Activated CD8-positive, alpha-beta T cell treated with anti-CD3 and anti-CD28 coated beads, Interleukin-2, amount 10 ng/mL, durations not matched to agents 7 days and 5 days (primary cell): ENCODE measurements at regions of chr1 and their contacts with region 1.

Region 1: DNA sequence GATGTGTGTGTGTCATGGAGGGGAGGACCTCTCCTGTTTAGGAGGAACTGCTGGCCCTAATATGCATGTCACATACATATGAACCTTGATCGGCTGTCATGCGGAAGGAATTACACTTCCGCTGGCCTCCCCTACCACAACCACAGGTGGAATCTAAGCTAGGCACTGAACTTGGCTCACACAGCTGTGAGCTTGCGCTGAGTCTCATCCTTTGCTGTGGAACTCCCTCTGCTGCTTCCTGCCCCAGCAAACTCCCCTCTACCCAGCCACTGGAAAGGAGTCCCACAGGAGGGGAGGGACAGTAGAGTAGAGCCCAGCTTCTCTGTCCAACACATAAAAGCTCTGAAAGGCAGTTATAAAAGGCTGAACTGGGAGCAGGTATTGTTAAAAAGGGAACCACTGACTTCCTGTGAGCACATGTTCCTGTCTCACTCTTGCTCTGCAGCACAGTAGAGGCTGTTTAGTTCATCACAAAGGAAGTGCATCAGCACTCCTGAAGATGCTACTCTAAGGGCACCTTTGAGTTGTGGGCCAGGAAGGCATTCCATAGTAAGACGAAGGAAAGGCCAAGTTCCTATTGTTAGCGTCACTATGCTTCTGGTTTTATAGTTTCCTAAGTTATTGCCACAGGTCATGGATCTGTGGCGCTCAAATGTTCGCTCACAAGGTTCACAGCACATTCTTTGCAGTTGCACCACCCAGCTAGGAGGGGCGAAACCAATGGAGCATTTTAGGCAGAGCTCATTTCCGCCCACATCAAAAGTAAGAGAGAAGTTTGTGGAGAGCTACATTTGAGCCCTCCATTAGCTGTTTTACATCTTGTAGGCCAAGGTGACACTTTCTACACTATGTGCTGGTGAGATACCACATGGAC is 17.7 kb upstream of the PTPRC start:
- DNase-seq: peak; percentile 86
- ATAC-seq: peak; percentile 77
- H3K4me3 Mint-ChIP-seq: peak overlapping the region; percentile 87
- H3K27ac Mint-ChIP-seq: peak overlapping the region; percentile 99
- H3K4me1 Mint-ChIP-seq: peaks cover 89% of the 10 kb centered on the region
- H3K27me3 Mint-ChIP-seq: no peaks in the 10 kb centered on the region

Region 2: GRCh38 chr1:198520524-198521254 is 100.5 kb before region 1 on chr1:
- CTCF ChIA-PET with region 1: interaction called, 26 read pairs
- POLR2A ChIA-PET with region 1: interaction called, 15 read pairs
- DNase-seq: no peak
- ATAC-seq: peak; percentile 63
- H3K4me3 Mint-ChIP-seq: peak overlapping the region; percentile 71
- H3K27ac Mint-ChIP-seq: peak overlapping the region; percentile 77
- H3K4me1 Mint-ChIP-seq: peaks cover 57% of the 10 kb centered on the region
- H3K27me3 Mint-ChIP-seq: no peaks in the 10 kb centered on the region

Region 3: DNA sequence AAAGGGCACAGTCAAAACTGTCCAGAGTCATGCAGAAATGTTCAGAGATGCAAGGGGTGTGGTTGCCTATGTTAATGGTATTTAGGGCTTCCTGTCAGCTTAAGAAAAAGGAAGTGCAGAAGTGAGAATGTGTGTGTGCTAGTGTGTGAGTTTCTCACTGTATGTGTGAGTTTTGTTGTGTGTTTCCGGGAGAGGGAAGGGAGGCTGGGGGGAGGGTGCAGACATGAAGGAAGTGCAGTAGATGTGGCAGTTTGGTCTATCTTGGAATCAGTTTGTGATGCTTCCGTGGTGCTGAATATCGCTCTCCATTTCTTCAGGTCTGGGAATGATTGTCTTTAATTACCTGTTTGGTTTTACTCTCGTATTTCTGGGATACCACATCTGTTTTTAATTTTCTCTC is 64.2 kb before region 1 on chr1:
- CTCF ChIA-PET with region 1: interaction called, 6 read pairs
- POLR2A ChIA-PET with region 1: interaction called, 13 read pairs
- DNase-seq: peak; percentile 85
- ATAC-seq: peak; percentile 89
- H3K4me3 Mint-ChIP-seq: peak overlapping the region; percentile 43
- H3K27ac Mint-ChIP-seq: peak overlapping the region; percentile 55
- H3K4me1 Mint-ChIP-seq: peaks cover 77% of the 10 kb centered on the region
- H3K27me3 Mint-ChIP-seq: no peaks in the 10 kb centered on the region

Region 4: GRCh38 chr1:198606020-198606438 is 15.2 kb before region 1 on chr1:
- CTCF ChIA-PET with region 1: interaction called, 45 read pairs
- POLR2A ChIA-PET with region 1: interaction called, 32 read pairs
- DNase-seq: no peak
- ATAC-seq: no peak
- H3K4me3 Mint-ChIP-seq: no peak overlapping the region
- H3K27ac Mint-ChIP-seq: no peak overlapping the region
- H3K4me1 Mint-ChIP-seq: peaks cover 60% of the 10 kb centered on the region
- H3K27me3 Mint-ChIP-seq: no peaks in the 10 kb centered on the region

Region 5: DNA sequence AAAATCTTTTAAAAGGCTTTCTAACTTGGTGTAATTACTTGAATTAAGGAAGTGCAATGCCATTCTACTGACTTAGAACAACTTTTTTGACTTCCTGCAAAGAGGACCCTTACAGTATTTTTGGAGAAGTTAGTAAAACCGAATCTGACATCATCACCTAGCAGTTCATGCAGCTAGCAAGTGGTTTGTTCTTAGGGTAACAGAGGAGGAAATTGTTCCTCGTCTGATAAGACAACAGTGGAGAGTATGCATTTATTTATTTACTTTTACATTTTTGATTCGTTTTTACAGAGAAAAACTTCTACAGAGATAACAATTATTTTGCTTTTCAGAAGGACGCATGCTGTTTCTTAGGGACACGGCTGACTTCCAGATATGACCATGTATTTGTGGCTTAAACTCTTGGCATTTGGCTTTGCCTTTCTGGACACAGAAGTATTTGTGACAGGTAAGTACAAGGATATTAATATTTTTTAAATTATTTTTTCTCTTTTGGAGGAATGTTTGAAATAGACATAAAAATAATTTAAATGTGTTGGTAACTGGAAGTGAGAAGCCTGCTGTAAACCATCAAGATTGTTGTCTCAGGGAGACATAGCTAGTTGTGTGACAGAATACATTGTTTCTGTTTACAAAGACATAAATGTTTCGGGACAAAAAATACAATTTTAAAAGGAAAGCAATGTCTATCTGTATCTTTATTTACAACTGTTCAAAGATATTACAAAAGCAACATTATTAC is 17.9 kb after region 1 on chr1 and contains the start of gene PTPRC:
- CTCF ChIA-PET with region 1: interaction called, 169 read pairs
- POLR2A ChIA-PET with region 1: interaction called, 215 read pairs
- DNase-seq: peak; percentile 65
- ATAC-seq: peak; percentile 62
- H3K4me3 Mint-ChIP-seq: peak within 1 kb of the TSS; percentile 83
- H3K27ac Mint-ChIP-seq: peak within 1 kb of the TSS; percentile 97
- H3K4me1 Mint-ChIP-seq: peaks cover 48% of the 10 kb centered on the region
- H3K27me3 Mint-ChIP-seq: no peaks in the 10 kb centered on the region
- total RNA-seq, gene PTPRC: 604 to 619 TPM

Region 6: GRCh38 chr1:198656500-198656932 is 35.3 kb after region 1 on chr1:
- CTCF ChIA-PET with region 1: interaction called, 29 read pairs
- POLR2A ChIA-PET with region 1: interaction called, 89 read pairs
- DNase-seq: peak; percentile 79
- ATAC-seq: peak; percentile 72
- H3K4me3 Mint-ChIP-seq: peak overlapping the region; percentile 75
- H3K27ac Mint-ChIP-seq: peak overlapping the region; percentile 92
- H3K4me1 Mint-ChIP-seq: peaks cover 67% of the 10 kb centered on the region
- H3K27me3 Mint-ChIP-seq: no peaks in the 10 kb centered on the region

Region 7: DNA sequence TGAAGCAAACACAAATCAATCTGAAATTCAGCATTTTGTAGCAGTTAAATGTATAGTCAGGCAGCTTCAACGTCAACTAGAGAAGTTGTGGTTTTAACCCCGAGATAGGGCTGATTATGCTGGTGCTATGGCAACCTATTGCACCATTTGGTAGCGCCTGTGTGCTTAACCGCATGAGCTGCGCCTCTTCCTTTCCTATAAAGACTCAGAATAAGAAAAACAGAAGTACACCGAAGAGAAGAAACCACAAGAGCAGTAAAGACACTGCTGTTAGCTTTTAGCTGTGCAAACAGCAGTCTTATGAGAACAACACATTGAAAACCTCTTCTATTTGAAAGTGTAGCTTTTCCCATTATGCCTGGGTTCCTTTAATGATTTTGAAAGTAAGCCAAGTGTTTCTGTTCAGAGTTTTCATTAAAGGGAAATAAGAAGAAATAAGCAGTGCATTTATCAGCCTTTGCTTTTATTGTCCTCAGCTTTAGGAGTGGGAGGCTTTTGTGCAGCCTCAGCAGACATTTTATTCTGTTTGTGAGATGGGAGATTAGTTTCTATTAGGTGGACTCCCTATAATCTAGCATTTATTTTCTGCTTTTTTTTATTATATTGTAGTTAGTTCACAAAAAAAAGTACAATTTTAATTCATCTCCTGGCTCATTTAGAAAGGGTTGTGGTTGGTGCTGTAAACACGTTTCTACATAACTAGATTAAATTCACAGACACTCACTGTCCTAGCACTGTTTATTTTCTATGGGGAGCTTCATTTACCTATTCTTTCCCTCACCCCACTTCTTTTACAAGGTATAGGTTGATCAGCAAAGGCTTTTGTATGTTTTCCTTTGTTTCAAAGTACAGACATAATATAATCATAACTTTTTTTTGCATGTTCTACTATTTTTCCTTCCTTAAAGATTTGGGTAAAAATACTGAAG is 60.9 kb after region 1 on chr1:
- CTCF ChIA-PET with region 1: interaction called, 46 read pairs
- POLR2A ChIA-PET with region 1: interaction called, 52 read pairs
- DNase-seq: peak; percentile 94
- ATAC-seq: peak; percentile 76
- H3K4me3 Mint-ChIP-seq: peak overlapping the region; percentile 74
- H3K27ac Mint-ChIP-seq: peak overlapping the region; percentile 96
- H3K4me1 Mint-ChIP-seq: peaks cover 84% of the 10 kb centered on the region
- H3K27me3 Mint-ChIP-seq: no peaks in the 10 kb centered on the region

Region 8: GRCh38 chr1:198771563-198772153 is 150.5 kb after region 1 on chr1:
- CTCF ChIA-PET with region 1: no interaction called
- POLR2A ChIA-PET with region 1: no interaction called
- DNase-seq: peak; percentile 39
- ATAC-seq: no peak
- H3K4me3 Mint-ChIP-seq: no peak overlapping the region
- H3K27ac Mint-ChIP-seq: no peak overlapping the region
- H3K4me1 Mint-ChIP-seq: peaks cover 9% of the 10 kb centered on the region
- H3K27me3 Mint-ChIP-seq: peaks cover 7% of the 10 kb centered on the region

Region 9: DNA sequence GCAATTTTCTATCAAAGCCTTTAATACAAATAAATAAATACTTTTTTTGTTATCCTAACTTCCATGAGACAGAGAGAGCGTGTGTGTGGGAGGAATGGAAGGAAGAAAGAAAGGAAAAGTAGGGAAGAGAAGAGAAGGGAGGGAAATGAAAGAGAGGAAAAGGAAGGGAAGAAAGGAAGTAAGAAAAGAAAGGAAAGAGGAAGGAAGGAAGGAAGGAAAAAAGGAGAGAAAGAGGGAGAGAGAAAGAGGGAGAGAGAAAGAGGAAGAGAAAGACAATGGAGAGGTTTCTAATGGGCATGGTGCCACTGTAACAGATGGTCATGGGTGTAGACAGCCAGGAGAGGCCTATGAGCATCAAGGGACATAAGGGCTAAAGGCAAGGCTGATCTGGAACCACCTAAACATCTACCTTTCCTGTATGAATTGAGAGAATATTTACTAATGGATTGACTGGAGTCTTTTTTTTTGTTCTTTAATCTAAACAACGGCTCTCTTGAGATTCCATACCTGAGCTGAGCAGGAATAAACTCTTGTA is 252.6 kb after region 1 on chr1:
- CTCF ChIA-PET with region 1: no interaction called
- POLR2A ChIA-PET with region 1: no interaction called
- DNase-seq: no peak
- ATAC-seq: no peak
- H3K4me3 Mint-ChIP-seq: no peak overlapping the region
- H3K27ac Mint-ChIP-seq: no peak overlapping the region
- H3K4me1 Mint-ChIP-seq: no peaks in the 10 kb centered on the region
- H3K27me3 Mint-ChIP-seq: no peaks in the 10 kb centered on the region